MCF 10A (cell line): ENCODE measurements at regions of chr9 and their contacts with region 1.

Region 1: GRCh38 chr9:72038890-72039410 is 21.5 kb downstream of the C9orf57 start:
- DNase-seq: peak; percentile 85
- H3K4me3 Mint-ChIP-seq: no peak overlapping the region
- H3K27ac Mint-ChIP-seq: no peak overlapping the region
- H3K4me1 Mint-ChIP-seq: peaks cover 12% of the 10 kb centered on the region
- H3K27me3 Mint-ChIP-seq: no peaks in the 10 kb centered on the region
- CTCF ChIP-seq: peak; percentile 94

Region 2: GRCh38 chr9:71937070-71937625 is 101.8 kb before region 1 on chr9:
- CTCF ChIA-PET with region 1: no interaction called
- POLR2A ChIA-PET with region 1: no interaction called
- intact Hi-C with region 1: no loop called
- DNase-seq: no peak
- H3K4me3 Mint-ChIP-seq: no peak overlapping the region
- H3K27ac Mint-ChIP-seq: peak overlapping the region; percentile 41
- H3K4me1 Mint-ChIP-seq: peaks cover 33% of the 10 kb centered on the region
- H3K27me3 Mint-ChIP-seq: no peaks in the 10 kb centered on the region
- CTCF ChIP-seq: no peak

Region 3: GRCh38 chr9:72065076-72065475 is 26.1 kb after region 1 on chr9:
- CTCF ChIA-PET with region 1: interaction called, 10 read pairs
- POLR2A ChIA-PET with region 1: no interaction called
- intact Hi-C with region 1: no loop called
- DNase-seq: peak; percentile 80
- H3K4me3 Mint-ChIP-seq: no peak overlapping the region
- H3K27ac Mint-ChIP-seq: no peak overlapping the region
- H3K4me1 Mint-ChIP-seq: no peaks in the 10 kb centered on the region
- H3K27me3 Mint-ChIP-seq: peaks cover 18% of the 10 kb centered on the region
- CTCF ChIP-seq: no peak

Region 4: DNA sequence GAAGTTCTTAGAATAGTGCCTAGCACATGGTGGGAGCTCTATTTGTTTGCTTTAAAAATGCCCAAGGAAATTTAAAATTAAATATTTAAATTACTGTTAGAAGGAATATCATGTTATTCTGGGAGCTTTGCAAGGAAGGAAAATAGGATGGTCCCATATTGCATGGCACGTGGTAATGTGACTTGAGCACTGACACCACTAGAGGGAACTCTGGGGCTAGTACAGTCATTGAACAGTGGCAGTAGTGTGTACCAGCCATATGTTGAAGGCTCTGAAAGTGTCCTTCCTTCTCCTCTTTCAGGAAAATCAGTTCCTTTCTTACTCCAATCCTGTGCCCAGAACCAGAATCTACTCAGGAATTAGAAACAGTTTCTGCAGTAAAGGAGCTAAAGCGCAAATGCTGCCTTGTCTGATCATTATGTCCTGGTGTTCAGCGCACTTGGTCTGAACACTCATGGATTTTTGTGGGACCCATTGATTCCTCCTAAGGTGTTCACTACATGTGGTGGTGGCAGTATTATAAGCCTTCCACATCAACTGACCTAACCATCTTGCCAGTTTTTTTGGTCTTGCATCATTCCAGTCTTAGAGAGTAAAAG is 164.4 kb after region 1 on chr9:
- CTCF ChIA-PET with region 1: interaction called, 70 read pairs
- POLR2A ChIA-PET with region 1: interaction called, 4 read pairs
- intact Hi-C with region 1: loop called (anchors 1 kb)
- DNase-seq: peak; percentile 73
- H3K4me3 Mint-ChIP-seq: no peak overlapping the region
- H3K27ac Mint-ChIP-seq: no peak overlapping the region
- H3K4me1 Mint-ChIP-seq: no peaks in the 10 kb centered on the region
- H3K27me3 Mint-ChIP-seq: peaks cover 20% of the 10 kb centered on the region
- CTCF ChIP-seq: peak; percentile 58

Region 5: DNA sequence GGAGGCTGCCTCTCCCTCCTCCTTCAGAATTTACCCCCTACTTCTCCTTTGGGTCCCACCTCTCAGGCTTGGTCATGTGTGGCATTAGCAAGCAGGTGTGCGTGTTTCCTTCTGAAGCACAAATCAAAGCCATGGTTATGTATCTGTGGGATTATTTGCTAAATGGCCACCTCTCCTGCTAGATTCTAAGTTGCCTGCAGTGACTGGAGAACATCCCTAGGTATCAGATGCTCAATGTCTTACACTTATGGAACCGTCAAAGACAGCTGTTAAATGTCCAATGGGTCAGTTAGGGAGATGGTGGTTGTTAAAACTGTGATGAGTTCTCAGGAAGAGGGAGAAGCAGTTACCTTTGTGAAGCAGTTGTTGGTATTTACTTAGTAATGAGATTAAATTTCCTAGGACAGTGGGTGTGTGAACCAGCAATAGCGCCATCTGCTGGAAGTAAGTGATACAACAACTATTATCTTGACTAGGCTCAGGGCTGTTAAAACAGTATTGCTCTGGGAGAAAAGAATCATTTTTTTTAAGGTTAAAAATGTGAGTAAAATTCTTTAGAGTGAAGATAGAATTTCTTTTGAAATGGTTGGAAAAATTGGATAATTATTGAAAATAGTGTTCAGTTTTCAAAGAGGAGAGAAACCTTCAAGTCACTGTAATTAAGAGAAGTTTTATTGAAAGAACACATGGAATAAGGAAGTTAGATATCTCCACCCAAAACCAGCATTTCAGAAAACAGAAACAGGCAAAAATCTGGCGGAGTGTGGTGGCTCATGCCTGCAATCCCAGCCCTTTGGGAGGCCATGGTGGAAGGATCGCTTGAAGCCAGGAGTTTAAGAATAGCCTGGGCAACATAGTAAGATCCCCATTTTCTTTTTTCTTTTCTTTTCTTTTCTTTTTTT is 553.8 kb after region 1 on chr9:
- CTCF ChIA-PET with region 1: interaction called, 9 read pairs
- POLR2A ChIA-PET with region 1: no interaction called
- intact Hi-C with region 1: loop called (anchors 2 kb)
- DNase-seq: peak; percentile 66
- H3K4me3 Mint-ChIP-seq: no peak overlapping the region
- H3K27ac Mint-ChIP-seq: no peak overlapping the region
- H3K4me1 Mint-ChIP-seq: peaks cover 15% of the 10 kb centered on the region
- H3K27me3 Mint-ChIP-seq: no peaks in the 10 kb centered on the region
- CTCF ChIP-seq: peak; percentile 64

Region 6: GRCh38 chr9:72817413-72817812 is 778.5 kb after region 1 on chr9:
- CTCF ChIA-PET with region 1: interaction called, 32 read pairs
- POLR2A ChIA-PET with region 1: interaction called, 3 read pairs
- intact Hi-C with region 1: loop called (anchors 1 kb)
- DNase-seq: no peak
- H3K4me3 Mint-ChIP-seq: no peak overlapping the region
- H3K27ac Mint-ChIP-seq: no peak overlapping the region
- H3K4me1 Mint-ChIP-seq: no peaks in the 10 kb centered on the region
- H3K27me3 Mint-ChIP-seq: peaks cover 12% of the 10 kb centered on the region
- CTCF ChIP-seq: no peak